Natural killer cell (primary cell): ENCODE measurements at regions of chr6 and their contacts with region 1.

Region 1: GRCh38 chr6:128327890-128328289 is 192.5 kb downstream of the PTPRK start:
- DNase-seq: peak in 1 of 2 donors; percentile 71
- ATAC-seq: peak; percentile 31 to 57 (median 57)
- H3K4me3 ChIP-seq: no peak overlapping the region
- H3K4me3 Mint-ChIP-seq: no peak overlapping the region
- H3K27ac ChIP-seq: no peak overlapping the region
- H3K27ac Mint-ChIP-seq: no peak overlapping the region
- H3K4me1 ChIP-seq: no peaks in the 10 kb centered on the region
- H3K4me1 Mint-ChIP-seq: no peaks in the 10 kb centered on the region
- H3K27me3 ChIP-seq: no peaks in the 10 kb centered on the region
- H3K27me3 Mint-ChIP-seq: no peaks in the 10 kb centered on the region
- CTCF ChIP-seq: peak; percentile 45

Region 2: DNA sequence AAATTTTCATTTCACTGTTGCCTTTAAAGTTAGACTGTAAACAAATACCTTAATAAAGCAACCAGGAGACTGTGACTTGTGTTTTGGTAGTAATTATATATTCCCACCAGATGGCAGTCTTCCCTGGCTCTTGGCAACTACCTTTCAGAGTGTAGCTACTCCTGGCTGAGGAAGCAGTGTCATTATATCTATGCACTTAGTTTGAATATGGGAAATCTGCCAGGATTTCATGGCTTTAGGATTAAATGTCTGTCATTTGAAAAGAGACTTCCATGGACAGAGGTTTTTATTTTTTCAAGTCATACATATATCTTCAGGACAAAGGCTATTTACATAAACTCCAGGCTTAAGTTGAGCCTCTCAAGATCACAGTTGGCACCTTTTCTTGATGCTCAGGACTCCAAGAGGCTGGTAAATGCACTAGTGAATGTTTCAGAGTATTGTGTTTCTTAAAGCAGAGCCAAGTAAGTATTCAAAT is 590.8 kb before region 1 on chr6:
- intact Hi-C with region 1: loop called (anchors 1 kb)
- DNase-seq: peak in 1 of 2 donors; percentile 85
- ATAC-seq: peak; percentile 69 to 79 (median 77)
- H3K4me3 ChIP-seq: no peak overlapping the region
- H3K4me3 Mint-ChIP-seq: no peak overlapping the region
- H3K27ac ChIP-seq: no peak overlapping the region
- H3K27ac Mint-ChIP-seq: no peak overlapping the region
- H3K4me1 ChIP-seq: no peaks in the 10 kb centered on the region
- H3K4me1 Mint-ChIP-seq: no peaks in the 10 kb centered on the region
- H3K27me3 ChIP-seq: no peaks in the 10 kb centered on the region
- H3K27me3 Mint-ChIP-seq: peaks cover 0 to 7% of the 10 kb centered on the region in 2 donors
- CTCF ChIP-seq: peak; percentile 57

Region 3: GRCh38 chr6:127855542-127856159 is 472.2 kb before region 1 on chr6:
- intact Hi-C with region 1: loop called (anchors 1 kb)
- DNase-seq: peak in 1 of 2 donors; percentile 78
- ATAC-seq: no peak
- H3K4me3 ChIP-seq: no peak overlapping the region
- H3K4me3 Mint-ChIP-seq: no peak overlapping the region
- H3K27ac ChIP-seq: no peak overlapping the region
- H3K27ac Mint-ChIP-seq: no peak overlapping the region
- H3K4me1 ChIP-seq: no peaks in the 10 kb centered on the region
- H3K4me1 Mint-ChIP-seq: peaks cover 4 to 6% of the 10 kb centered on the region in 2 donors
- H3K27me3 ChIP-seq: no peaks in the 10 kb centered on the region
- H3K27me3 Mint-ChIP-seq: peaks cover 0 to 3% of the 10 kb centered on the region in 2 donors
- CTCF ChIP-seq: peak; percentile 65

Region 4: DNA sequence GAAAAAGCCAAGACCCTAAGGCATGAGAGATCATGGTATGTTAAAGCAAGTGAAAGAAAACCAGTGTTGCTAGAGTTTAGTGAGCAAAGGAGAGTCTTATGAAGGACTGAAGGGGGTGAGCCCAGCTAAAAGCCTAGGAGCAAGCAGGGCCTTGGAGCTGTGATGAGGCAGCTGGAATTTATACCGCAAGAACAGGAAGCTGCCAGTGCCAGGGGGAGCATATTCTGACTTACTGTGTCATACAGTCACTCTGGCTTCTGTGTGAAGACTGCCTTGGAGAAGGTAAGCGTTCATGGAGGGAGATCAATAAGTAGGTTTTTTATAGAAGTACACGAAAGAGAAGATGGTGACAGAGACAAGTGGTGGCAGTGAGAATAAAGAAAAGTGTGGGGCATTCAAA is 118.1 kb before region 1 on chr6:
- intact Hi-C with region 1: no loop called
- DNase-seq: no peak
- ATAC-seq: no peak
- H3K4me3 ChIP-seq: no peak overlapping the region
- H3K4me3 Mint-ChIP-seq: no peak overlapping the region
- H3K27ac ChIP-seq: no peak overlapping the region
- H3K27ac Mint-ChIP-seq: no peak overlapping the region
- H3K4me1 ChIP-seq: no peaks in the 10 kb centered on the region
- H3K4me1 Mint-ChIP-seq: peaks cover 0 to 5% of the 10 kb centered on the region in 2 donors
- H3K27me3 ChIP-seq: no peaks in the 10 kb centered on the region
- H3K27me3 Mint-ChIP-seq: no peaks in the 10 kb centered on the region
- CTCF ChIP-seq: no peak

Region 5: DNA sequence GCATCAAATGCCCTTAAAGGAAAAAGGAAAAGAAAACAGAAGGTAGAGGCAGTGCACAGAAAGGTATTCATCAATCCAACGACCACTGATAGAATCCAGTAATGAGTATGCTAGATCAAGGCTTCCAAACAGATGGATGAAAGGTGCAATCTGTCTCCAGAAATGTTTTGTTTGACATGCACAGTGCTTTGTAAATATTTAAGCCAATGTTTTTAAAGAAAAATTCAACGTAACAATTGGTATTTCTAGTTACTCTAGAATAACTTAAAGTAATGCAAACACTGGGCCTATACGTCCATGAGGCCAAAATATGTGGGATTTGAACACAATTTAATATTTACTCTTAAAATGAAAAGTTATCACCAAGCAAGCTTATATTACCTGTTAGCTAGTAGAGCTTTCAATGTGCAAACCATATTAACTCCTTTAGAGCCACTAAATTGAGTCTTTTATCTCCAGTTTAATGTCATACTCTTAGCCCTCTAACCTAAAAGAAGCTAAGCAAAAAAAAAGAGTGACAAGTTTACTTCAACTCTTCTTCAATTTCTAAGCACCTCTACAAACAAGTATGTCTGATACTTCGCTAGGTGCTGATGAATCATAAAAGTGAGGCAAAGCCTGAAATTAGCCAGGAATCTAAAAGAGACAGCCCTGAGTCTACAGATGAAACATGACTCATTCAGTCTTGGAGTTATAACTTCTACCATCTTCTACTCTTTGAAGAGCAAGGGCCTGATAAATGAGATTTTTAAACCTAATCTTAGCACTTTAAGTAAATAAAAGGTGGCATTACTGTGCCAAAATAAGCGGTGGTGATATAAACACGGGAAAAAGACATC is 22.7 kb after region 1 on chr6:
- intact Hi-C with region 1: no loop called
- DNase-seq: no peak
- ATAC-seq: no peak
- H3K4me3 ChIP-seq: no peak overlapping the region
- H3K4me3 Mint-ChIP-seq: no peak overlapping the region
- H3K27ac ChIP-seq: no peak overlapping the region
- H3K27ac Mint-ChIP-seq: no peak overlapping the region
- H3K4me1 ChIP-seq: no peaks in the 10 kb centered on the region
- H3K4me1 Mint-ChIP-seq: no peaks in the 10 kb centered on the region
- H3K27me3 ChIP-seq: no peaks in the 10 kb centered on the region
- H3K27me3 Mint-ChIP-seq: peaks cover 0 to 11% of the 10 kb centered on the region in 2 donors
- CTCF ChIP-seq: no peak